ENCODE measurements at regions of chr18 and their contacts with region 1.

Region 1: DNA sequence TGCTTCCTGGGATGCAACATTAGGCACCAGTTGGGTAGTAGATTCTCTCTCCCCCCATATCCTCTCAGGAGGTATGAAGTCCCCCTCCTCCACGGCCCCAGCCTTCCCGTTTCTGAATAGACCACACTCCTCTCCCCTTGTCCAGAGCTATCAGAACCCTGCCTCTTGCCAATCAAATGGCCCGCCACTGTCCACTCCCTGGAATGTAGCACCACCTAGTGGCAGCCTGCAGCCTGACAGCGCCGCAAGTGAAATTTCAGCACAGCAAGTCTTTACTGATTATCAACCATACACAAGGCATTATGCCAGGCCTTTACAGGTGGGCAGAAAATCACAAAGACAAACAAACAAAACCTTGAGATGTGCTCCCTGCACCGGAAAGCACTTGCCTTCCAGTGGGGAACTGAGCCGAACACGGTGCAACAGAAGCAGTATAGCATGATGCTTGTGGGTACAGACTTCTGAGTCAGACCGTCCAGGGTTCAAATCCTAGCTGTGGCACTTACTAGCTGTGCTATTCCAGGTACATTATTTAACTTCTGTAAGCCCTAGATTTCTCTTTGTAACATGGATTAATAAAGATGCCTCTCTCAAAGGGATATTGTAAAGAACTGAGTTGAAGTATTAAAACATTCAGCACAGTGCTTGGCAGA is 174.0 kb downstream of the SMAD2 start:
- DNase-seq: peak in 9 of 10 donors; percentile 24 to 75 (median 58)
- H3K4me3 ChIP-seq: no peak overlapping the region
- H3K27ac ChIP-seq: no peak overlapping the region
- H3K27me3 ChIP-seq: peaks cover 0 to 21% (median 0%) of the 10 kb centered on the region in 45 donors
- CTCF ChIP-seq: peak; percentile 52 to 92 (median 84)

Region 2: DNA sequence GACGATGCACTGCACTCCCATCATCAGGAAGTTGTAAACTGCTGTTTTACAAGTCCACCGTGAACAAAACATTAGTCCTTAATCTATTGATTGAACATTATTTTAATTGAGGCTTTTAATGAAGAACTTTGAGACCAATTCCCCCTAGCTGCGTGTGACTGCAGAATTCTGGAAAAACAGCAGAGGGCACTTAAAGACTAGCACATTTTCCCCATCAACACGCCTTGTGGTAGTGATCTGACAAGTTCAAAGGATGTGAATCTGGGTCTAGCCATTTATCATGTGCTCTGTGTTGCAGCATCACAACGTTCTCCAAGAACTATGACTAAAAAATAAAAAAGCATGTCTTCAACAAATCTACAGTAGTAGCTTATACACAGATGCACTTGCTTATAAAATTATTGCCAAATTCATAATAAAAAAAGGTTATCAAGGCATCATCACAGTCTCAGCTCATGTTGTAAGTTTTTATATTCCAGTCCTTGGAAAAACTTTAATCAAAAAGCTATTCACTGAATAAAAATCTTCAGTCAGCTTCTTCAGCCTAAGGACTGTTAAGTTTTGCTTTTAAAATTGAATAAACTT is 540.8 kb before region 1 on chr18:
- intact Hi-C with region 1: loop called in 1 of 2 experiments (anchors 2 kb)
- DNase-seq: peak in 5 of 10 donors; percentile 7 to 39 (median 34)
- H3K4me3 ChIP-seq: no peak overlapping the region
- H3K27ac ChIP-seq: no peak overlapping the region
- H3K27me3 ChIP-seq: peaks cover 0 to 47% (median 10%) of the 10 kb centered on the region in 45 donors
- CTCF ChIP-seq: peak; percentile 33 to 93 (median 78)